CD4-positive, alpha-beta memory T cell (primary cell): ENCODE measurements at regions of chr6 and their contacts with region 1.

Region 1: DNA sequence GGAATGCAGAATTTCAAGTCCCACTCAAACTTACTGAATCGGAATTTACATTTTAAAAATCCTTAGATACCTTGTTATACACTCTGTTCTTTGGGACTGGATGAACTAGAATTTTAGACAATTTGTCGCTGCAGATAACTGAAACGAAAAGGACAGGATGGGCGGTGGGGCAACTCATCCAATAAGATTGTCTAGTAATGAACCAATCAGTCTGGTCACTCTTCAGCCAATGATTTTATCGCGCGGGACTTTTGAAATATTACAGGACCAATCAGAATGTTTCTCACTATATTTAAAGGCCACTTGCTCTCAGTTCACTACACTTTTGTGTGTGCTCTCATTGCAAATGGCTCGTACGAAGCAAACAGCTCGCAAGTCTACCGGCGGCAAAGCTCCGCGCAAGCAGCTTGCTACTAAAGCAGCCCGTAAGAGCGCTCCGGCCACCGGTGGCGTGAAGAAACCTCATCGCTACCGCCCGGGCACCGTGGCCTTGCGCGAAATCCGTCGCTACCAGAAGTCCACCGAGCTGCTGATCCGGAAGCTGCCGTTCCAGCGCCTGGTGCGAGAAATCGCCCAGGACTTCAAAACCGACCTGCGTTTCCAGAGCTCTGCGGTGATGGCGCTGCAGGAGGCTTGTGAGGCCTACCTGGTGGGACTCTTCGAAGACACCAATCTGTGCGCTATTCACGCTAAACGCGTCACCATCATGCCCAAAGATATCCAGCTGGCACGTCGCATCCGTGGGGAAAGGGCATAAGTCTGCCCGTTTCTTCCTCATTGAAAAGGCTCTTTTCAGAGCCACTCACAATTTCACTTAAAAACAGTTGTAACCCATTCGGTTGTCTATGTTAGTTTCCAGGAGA is 41.9 kb upstream of the HFE start:
- DNase-seq: peak; percentile 88 to 91 (median 90)
- H3K4me3 ChIP-seq: peak overlapping the region; percentile 72 to 74
- H3K4me3 Mint-ChIP-seq: peak overlapping the region; percentile 88 to 98 (median 94)
- H3K27ac ChIP-seq: peak overlapping the region; percentile 76
- H3K27ac Mint-ChIP-seq: peak overlapping the region; percentile 93 to 99 (median 98)
- H3K4me1 ChIP-seq: peaks cover 14% of the 10 kb centered on the region
- H3K4me1 Mint-ChIP-seq: peaks cover 12 to 28% (median 20%) of the 10 kb centered on the region in 4 donors
- H3K27me3 ChIP-seq: no peaks in the 10 kb centered on the region
- H3K27me3 Mint-ChIP-seq: no peaks in the 10 kb centered on the region

Region 2: GRCh38 chr6:25179051-25179778 is 866.1 kb before region 1 on chr6:
- CTCF ChIA-PET with region 1: no interaction called
- POLR2A ChIA-PET with region 1: no interaction called
- intact Hi-C with region 1: no loop called
- DNase-seq: no peak
- H3K4me3 ChIP-seq: no peak overlapping the region
- H3K4me3 Mint-ChIP-seq: no peak overlapping the region
- H3K27ac ChIP-seq: no peak overlapping the region
- H3K27ac Mint-ChIP-seq: peak overlapping the region in 1 of 7 donors; percentile 10
- H3K4me1 ChIP-seq: no peaks in the 10 kb centered on the region
- H3K4me1 Mint-ChIP-seq: peaks cover 0 to 3% (median under 1%) of the 10 kb centered on the region in 4 donors
- H3K27me3 ChIP-seq: no peaks in the 10 kb centered on the region
- H3K27me3 Mint-ChIP-seq: peaks cover 0 to 5% of the 10 kb centered on the region in 2 donors

Region 3: DNA sequence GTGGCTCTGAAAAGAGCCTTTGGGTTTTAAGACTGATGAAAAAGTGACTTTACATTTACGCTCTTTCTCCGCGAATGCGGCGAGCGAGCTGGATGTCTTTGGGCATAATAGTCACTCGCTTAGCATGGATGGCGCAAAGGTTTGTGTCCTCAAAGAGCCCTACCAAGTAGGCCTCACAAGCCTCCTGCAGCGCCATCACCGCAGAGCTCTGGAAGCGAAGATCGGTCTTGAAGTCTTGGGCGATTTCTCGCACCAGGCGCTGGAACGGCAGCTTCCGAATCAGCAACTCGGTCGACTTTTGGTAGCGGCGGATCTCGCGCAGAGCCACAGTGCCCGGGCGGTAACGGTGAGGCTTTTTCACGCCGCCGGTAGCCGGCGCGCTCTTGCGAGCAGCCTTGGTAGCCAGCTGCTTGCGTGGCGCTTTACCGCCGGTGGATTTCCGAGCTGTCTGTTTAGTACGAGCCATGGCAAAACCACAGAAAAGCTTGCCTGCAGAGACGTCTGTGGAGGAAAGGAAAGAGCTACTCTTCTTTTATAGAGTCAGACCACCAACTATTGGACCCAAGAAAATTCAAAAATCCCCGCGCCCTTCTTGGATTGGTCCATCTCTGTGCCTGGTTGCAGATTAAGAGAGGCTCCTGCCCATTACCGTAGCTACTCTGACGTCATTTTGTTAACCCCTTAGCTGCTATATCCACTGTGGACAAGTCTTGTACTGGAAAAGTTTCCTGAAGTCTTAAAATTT is 13.5 kb before region 1 on chr6:
- CTCF ChIA-PET with region 1: interaction called, 144 read pairs
- POLR2A ChIA-PET with region 1: interaction called, 1,198 read pairs
- intact Hi-C with region 1: loop called (anchors 1 kb)
- DNase-seq: peak; percentile 86 to 94 (median 89)
- H3K4me3 ChIP-seq: peak overlapping the region; percentile 53 to 67
- H3K4me3 Mint-ChIP-seq: peak overlapping the region; percentile 91 to 99 (median 94)
- H3K27ac ChIP-seq: peak overlapping the region; percentile 71
- H3K27ac Mint-ChIP-seq: peak overlapping the region; percentile 89 to 98 (median 96)
- H3K4me1 ChIP-seq: peaks cover 35% of the 10 kb centered on the region
- H3K4me1 Mint-ChIP-seq: peaks cover 33 to 54% (median 44%) of the 10 kb centered on the region in 4 donors
- H3K27me3 ChIP-seq: no peaks in the 10 kb centered on the region
- H3K27me3 Mint-ChIP-seq: peaks cover 0 to 3% of the 10 kb centered on the region in 2 donors

Region 4: GRCh38 chr6:26097268-26097875 is 52.1 kb after region 1 on chr6:
- CTCF ChIA-PET with region 1: interaction called, 29 read pairs
- POLR2A ChIA-PET with region 1: interaction called, 65 read pairs
- intact Hi-C with region 1: no loop called
- DNase-seq: peak; percentile 61 to 68 (median 66)
- H3K4me3 ChIP-seq: no peak overlapping the region
- H3K4me3 Mint-ChIP-seq: no peak overlapping the region
- H3K27ac ChIP-seq: no peak overlapping the region
- H3K27ac Mint-ChIP-seq: peak overlapping the region in 1 of 7 donors; percentile 43
- H3K4me1 ChIP-seq: no peaks in the 10 kb centered on the region
- H3K4me1 Mint-ChIP-seq: peaks cover 0 to 5% (median 5%) of the 10 kb centered on the region in 4 donors
- H3K27me3 ChIP-seq: no peaks in the 10 kb centered on the region
- H3K27me3 Mint-ChIP-seq: peaks cover 2% of the 10 kb centered on the region in 2 donors

Region 5: GRCh38 chr6:26183581-26184366 is 138.5 kb after region 1 on chr6:
- CTCF ChIA-PET with region 1: interaction called, 3 read pairs
- POLR2A ChIA-PET with region 1: interaction called, 19 read pairs
- intact Hi-C with region 1: no loop called
- DNase-seq: peak; percentile 72 to 81 (median 79)
- H3K4me3 ChIP-seq: peak overlapping the region; percentile 2 to 69
- H3K4me3 Mint-ChIP-seq: peak overlapping the region; percentile 90 to 100 (median 96)
- H3K27ac ChIP-seq: peak overlapping the region; percentile 67
- H3K27ac Mint-ChIP-seq: peak overlapping the region; percentile 78 to 99 (median 95)
- H3K4me1 ChIP-seq: peaks cover 45% of the 10 kb centered on the region
- H3K4me1 Mint-ChIP-seq: peaks cover 29 to 54% (median 37%) of the 10 kb centered on the region in 4 donors
- H3K27me3 ChIP-seq: no peaks in the 10 kb centered on the region
- H3K27me3 Mint-ChIP-seq: no peaks in the 10 kb centered on the region

Region 6: DNA sequence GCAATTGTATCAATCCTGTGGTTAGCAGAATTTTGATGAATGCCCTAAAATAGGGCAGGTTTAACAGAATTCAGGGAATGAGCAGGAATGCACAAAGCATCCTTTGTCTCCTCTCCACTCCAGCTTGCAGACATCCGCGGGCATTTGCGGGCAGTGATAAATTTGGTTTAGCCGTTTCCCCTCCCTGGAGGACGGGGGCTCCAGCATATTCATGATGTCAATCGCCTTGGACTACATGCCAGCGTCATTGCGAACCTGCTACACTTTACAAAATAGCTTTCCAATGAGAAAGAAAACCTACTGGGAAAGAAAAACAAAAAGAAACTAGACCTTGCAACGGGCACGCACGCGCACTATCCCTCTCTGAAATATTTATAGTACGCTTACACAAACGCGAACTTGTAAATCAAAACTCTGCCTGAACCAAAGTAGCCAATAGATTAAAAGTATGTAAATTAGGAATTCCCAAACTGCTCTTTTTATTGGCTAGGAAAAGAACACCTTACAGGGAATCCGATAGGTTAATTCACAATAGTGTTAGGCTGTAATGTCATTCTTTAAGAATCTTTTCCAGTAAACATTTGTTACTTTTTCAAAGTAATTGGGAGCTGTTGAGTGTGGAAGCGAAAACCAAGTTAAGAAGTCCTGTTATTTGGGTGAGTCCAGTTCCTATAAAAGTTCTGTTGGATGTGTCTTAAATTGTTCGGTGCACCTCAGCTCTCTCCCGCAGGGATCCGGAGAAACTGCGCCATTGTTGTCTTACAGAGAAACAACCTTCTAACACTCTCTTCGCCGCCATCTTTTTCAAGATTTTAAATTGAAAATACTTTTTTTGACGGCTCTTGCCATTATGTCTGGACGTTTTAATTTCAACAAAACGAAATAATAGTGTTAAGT is 178.6 kb after region 1 on chr6:
- CTCF ChIA-PET with region 1: no interaction called
- POLR2A ChIA-PET with region 1: interaction called, 14 read pairs
- intact Hi-C with region 1: no loop called
- DNase-seq: peak; percentile 74 to 87 (median 84)
- H3K4me3 ChIP-seq: peak overlapping the region; percentile 45 to 82
- H3K4me3 Mint-ChIP-seq: no peak overlapping the region
- H3K27ac ChIP-seq: peak overlapping the region; percentile 69
- H3K27ac Mint-ChIP-seq: no peak overlapping the region
- H3K4me1 ChIP-seq: peaks cover 21% of the 10 kb centered on the region
- H3K4me1 Mint-ChIP-seq: peaks cover 6 to 8% (median 7%) of the 10 kb centered on the region in 4 donors
- H3K27me3 ChIP-seq: no peaks in the 10 kb centered on the region
- H3K27me3 Mint-ChIP-seq: no peaks in the 10 kb centered on the region

Region 7: GRCh38 chr6:27132532-27133280 is 1087.4 kb after region 1 on chr6:
- CTCF ChIA-PET with region 1: no interaction called
- POLR2A ChIA-PET with region 1: interaction called, 22 read pairs
- intact Hi-C with region 1: loop called (anchors 1 kb)
- DNase-seq: peak; percentile 96 to 99 (median 98)
- H3K4me3 ChIP-seq: peak overlapping the region; percentile 72 to 90
- H3K4me3 Mint-ChIP-seq: no peak overlapping the region
- H3K27ac ChIP-seq: peak overlapping the region; percentile 93
- H3K27ac Mint-ChIP-seq: no peak overlapping the region
- H3K4me1 ChIP-seq: peaks cover 27% of the 10 kb centered on the region
- H3K4me1 Mint-ChIP-seq: peaks cover 0 to 24% (median 10%) of the 10 kb centered on the region in 4 donors
- H3K27me3 ChIP-seq: no peaks in the 10 kb centered on the region
- H3K27me3 Mint-ChIP-seq: no peaks in the 10 kb centered on the region